PC-3 (cell line): ENCODE measurements at regions of chr1 and their contacts with region 1.

Region 1: DNA sequence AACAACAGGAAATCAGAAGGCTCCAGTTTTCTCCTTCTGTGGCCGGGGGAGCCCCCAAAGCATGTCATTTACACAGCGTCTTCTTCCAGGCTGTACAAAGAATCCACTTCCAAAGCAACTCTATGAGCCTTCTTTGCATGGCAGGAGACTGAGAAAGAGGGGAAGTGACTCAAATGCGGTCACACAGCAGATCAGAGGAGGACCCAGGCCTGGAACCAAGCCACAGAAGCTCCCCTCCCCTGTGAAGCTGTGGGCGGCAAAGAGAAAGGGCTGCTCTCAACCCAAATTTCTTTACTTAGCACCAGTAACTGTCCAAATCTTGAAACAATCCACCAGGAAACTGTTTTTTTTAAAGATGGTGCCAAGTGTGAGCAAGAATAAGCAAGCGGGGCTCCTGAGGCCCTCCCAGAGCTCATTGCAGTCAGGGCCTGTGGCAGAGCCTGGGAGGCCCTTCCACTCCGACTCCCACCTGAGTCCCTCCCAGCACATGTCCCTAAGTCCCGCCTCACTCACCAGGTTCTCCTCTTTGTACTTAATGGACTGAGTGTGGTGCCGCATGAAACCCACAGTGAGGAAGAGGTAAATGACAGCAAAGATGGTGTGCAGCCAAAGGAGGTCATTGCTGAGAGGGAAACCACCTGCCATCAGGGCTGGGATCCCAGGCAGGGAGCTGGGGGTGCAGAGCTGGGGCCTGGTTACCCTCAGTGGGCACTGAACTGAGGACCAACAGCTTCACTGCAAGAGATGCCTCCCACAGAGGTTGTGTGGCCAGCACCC is 15.9 kb downstream of the TMEM63A start:
- DNase-seq: peak; percentile 95
- ATAC-seq: peak; percentile 87
- H3K4me3 ChIP-seq: no peak overlapping the region; the same call in 1 of the 2 replicates
- H3K27ac ChIP-seq: peak overlapping the region; percentile 90
- H3K4me1 ChIP-seq: peaks cover 46% of the 10 kb centered on the region
- H3K27me3 ChIP-seq: no peaks in the 10 kb centered on the region
- CTCF ChIP-seq: no peak

Region 2: GRCh38 chr1:226104671-226105121 is 238.4 kb after region 1 on chr1:
- CTCF ChIA-PET with region 1: interaction called, 10 read pairs
- POLR2A ChIA-PET with region 1: no interaction called
- intact Hi-C with region 1: no loop called
- DNase-seq: peak; percentile 65
- ATAC-seq: peak; percentile 20; the same call in 1 of the 2 replicates
- H3K4me3 ChIP-seq: no peak overlapping the region
- H3K27ac ChIP-seq: no peak overlapping the region
- H3K4me1 ChIP-seq: peaks cover 43% of the 10 kb centered on the region
- H3K27me3 ChIP-seq: no peaks in the 10 kb centered on the region
- CTCF ChIP-seq: no peak